Naive thymus-derived CD4-positive, alpha-beta T cell (primary cell): ENCODE measurements at regions of chr3 and their contacts with region 1.

Region 1: DNA sequence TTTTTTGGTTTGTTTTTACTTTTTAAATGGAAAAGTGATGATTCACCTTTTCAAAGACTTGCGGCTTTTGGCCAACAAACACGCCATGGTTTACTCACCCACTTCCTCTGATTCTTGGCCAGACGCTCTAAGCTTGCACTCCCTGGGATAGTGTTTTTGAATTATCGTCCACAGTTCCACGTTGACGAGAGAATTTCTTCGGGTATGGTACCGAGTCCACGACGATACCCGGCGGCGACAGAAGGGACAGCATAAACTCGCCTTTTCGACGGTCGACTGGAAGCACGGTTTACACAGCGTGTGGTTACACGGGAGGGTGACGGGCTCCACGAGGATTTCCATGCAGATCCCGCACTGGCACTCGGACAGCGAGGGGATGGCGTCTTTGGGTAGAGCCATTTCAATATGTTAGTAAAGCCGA is 783 bp downstream of the RNF168 start:
- DNase-seq: peak; percentile 17 to 74 (median 49)
- ATAC-seq: peak; percentile 56
- H3K4me3 ChIP-seq: peak overlapping the region; percentile 94
- H3K4me3 Mint-ChIP-seq: peak overlapping the region; percentile 92 to 100 (median 98)
- H3K27ac ChIP-seq: peak overlapping the region; percentile 79
- H3K27ac Mint-ChIP-seq: peak overlapping the region; percentile 86 to 96 (median 95)
- H3K4me1 ChIP-seq: peaks cover 12 to 20% of the 10 kb centered on the region in 2 donors
- H3K4me1 Mint-ChIP-seq: peaks cover 27 to 47% (median 40%) of the 10 kb centered on the region in 7 donors
- H3K27me3 ChIP-seq: no peaks in the 10 kb centered on the region
- H3K27me3 Mint-ChIP-seq: peaks cover 0 to 10% (median 0%) of the 10 kb centered on the region in 5 donors

Region 2: DNA sequence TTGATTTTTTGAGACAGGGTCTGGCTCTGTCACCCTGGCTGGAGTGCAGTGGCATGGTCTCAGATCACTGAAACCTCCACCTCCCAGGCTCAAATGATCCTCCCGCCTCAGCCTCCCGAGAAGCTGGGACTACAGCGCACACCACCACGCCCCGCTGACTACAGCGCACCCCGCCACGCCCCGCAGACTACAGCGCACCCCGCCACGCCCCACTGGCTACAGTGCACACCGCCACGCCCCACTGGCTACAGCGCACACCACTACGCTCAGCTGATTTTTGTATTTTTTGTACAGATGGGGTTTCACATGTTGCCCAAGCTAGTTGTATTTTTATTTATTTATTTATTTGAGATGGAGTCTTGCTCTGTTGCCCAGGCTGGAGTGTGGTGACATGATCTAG is 250.9 kb before region 1 on chr3:
- CTCF ChIA-PET with region 1: no interaction called
- POLR2A ChIA-PET with region 1: no interaction called
- intact Hi-C with region 1: loop called in 1 of 2 experiments (anchors 5 kb)
- DNase-seq: no peak
- ATAC-seq: no peak
- H3K4me3 ChIP-seq: no peak overlapping the region
- H3K4me3 Mint-ChIP-seq: no peak overlapping the region
- H3K27ac ChIP-seq: no peak overlapping the region
- H3K27ac Mint-ChIP-seq: no peak overlapping the region
- H3K4me1 ChIP-seq: no peaks in the 10 kb centered on the region
- H3K4me1 Mint-ChIP-seq: peaks cover 0 to 8% (median 2%) of the 10 kb centered on the region in 7 donors
- H3K27me3 ChIP-seq: no peaks in the 10 kb centered on the region
- H3K27me3 Mint-ChIP-seq: no peaks in the 10 kb centered on the region

Region 3: GRCh38 chr3:196287440-196288148 is 215.2 kb before region 1 on chr3 and contains the start of gene PCYT1A:
- CTCF ChIA-PET with region 1: no interaction called
- POLR2A ChIA-PET with region 1: no interaction called
- intact Hi-C with region 1: loop called in 1 of 2 experiments (anchors 1 kb)
- DNase-seq: peak; percentile 48 to 75 (median 65)
- ATAC-seq: peak; percentile 93
- H3K4me3 ChIP-seq: peak within 1 kb of the TSS; percentile 99
- H3K4me3 Mint-ChIP-seq: peak within 1 kb of the TSS; percentile 98 to 100 (median 99)
- H3K27ac ChIP-seq: peak within 1 kb of the TSS; percentile 84
- H3K27ac Mint-ChIP-seq: peak within 1 kb of the TSS; percentile 92 to 98 (median 97)
- H3K4me1 ChIP-seq: peaks cover 12 to 15% of the 10 kb centered on the region in 2 donors
- H3K4me1 Mint-ChIP-seq: peaks cover 20 to 56% (median 46%) of the 10 kb centered on the region in 7 donors
- H3K27me3 ChIP-seq: no peaks in the 10 kb centered on the region
- H3K27me3 Mint-ChIP-seq: peaks cover 0 to 2% (median 0%) of the 10 kb centered on the region in 5 donors
- total RNA-seq, gene PCYT1A: 47.5 to 87.6 (median 62.9) TPM

Region 4: GRCh38 chr3:196432137-196432879 is 70.5 kb before region 1 on chr3 and contains the start of gene UBXN7:
- CTCF ChIA-PET with region 1: no interaction called
- POLR2A ChIA-PET with region 1: interaction called, 8 read pairs
- intact Hi-C with region 1: loop called (anchors 1 kb)
- DNase-seq: peak; percentile 92 to 97 (median 95)
- ATAC-seq: peak; percentile 94
- H3K4me3 ChIP-seq: peak within 1 kb of the TSS; percentile 100
- H3K4me3 Mint-ChIP-seq: peak within 1 kb of the TSS; percentile 81 to 98 (median 86)
- H3K27ac ChIP-seq: peak within 1 kb of the TSS; percentile 90
- H3K27ac Mint-ChIP-seq: peak within 1 kb of the TSS; percentile 68 to 95 (median 81)
- H3K4me1 ChIP-seq: peaks cover 4 to 6% of the 10 kb centered on the region in 2 donors
- H3K4me1 Mint-ChIP-seq: peaks cover 17 to 39% (median 32%) of the 10 kb centered on the region in 7 donors
- H3K27me3 ChIP-seq: no peaks in the 10 kb centered on the region
- H3K27me3 Mint-ChIP-seq: peaks cover 0 to 2% (median 0%) of the 10 kb centered on the region in 5 donors
- total RNA-seq, gene UBXN7: 52.6 to 90.6 (median 77.0) TPM

Region 5: GRCh38 chr3:196528639-196529233 is 26.0 kb after region 1 on chr3:
- CTCF ChIA-PET with region 1: interaction called, 3 read pairs
- POLR2A ChIA-PET with region 1: interaction called, 8 read pairs
- intact Hi-C with region 1: loop called (anchors 1 kb)
- DNase-seq: peak; percentile 7 to 93 (median 44)
- ATAC-seq: peak; percentile 98
- H3K4me3 ChIP-seq: peak overlapping the region; percentile 57
- H3K4me3 Mint-ChIP-seq: peak overlapping the region in 9 of 10 donors; percentile 42 to 80 (median 66)
- H3K27ac ChIP-seq: no peak overlapping the region
- H3K27ac Mint-ChIP-seq: peak overlapping the region in 2 of 9 donors; percentile 62 to 74
- H3K4me1 ChIP-seq: peaks cover 0 to 3% of the 10 kb centered on the region in 2 donors
- H3K4me1 Mint-ChIP-seq: peaks cover 0 to 17% (median 0%) of the 10 kb centered on the region in 7 donors
- H3K27me3 ChIP-seq: no peaks in the 10 kb centered on the region
- H3K27me3 Mint-ChIP-seq: peaks cover 7 to 16% (median 16%) of the 10 kb centered on the region in 5 donors

Region 6: DNA sequence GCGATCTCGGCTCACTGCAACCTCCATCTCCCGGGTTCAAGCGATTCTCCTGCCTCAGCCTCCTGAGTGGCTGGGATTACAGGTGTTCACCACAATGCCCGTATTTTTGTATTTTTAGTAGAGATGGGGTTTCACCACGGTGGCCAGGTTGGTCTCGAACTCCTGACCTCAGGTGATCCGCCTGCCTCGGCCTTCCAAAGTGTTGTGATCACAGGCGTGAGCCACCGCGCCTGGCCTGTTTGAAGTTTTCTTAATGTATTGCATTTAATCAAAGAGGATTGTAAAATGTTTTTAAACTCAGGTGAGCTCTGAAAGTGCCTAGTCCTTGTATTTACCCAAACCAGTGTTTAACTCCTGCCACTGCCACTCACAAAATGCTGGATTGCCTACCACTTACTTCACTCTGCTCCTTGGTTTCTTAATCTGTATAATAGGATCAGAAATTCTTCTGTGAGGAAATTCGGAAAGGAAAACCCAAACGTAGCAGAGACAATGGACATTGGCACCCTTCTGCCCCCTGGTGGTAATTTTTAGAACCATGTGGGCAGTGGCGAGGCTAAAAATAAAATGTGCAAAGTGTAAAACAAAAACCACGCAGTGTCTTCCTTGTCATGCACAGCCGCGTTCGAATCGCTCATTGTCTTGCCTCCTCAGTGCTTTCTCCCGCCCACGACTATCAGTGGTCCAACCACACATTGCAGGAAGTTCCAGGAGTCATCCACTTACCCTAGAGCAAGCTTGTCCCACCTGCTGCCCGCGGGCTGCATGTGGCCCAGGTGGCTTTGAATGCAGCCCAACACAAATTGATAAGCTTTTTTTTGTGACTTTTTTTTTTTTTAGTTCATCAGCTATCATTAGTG is 182.0 kb after region 1 on chr3:
- CTCF ChIA-PET with region 1: no interaction called
- POLR2A ChIA-PET with region 1: no interaction called
- intact Hi-C with region 1: no loop called
- DNase-seq: peak; percentile 29 to 78 (median 62)
- ATAC-seq: peak; percentile 78
- H3K4me3 ChIP-seq: peak overlapping the region; percentile 28
- H3K4me3 Mint-ChIP-seq: peak overlapping the region; percentile 51 to 69 (median 67)
- H3K27ac ChIP-seq: peak overlapping the region; percentile 34
- H3K27ac Mint-ChIP-seq: peak overlapping the region; percentile 38 to 80 (median 71)
- H3K4me1 ChIP-seq: peaks cover 0 to 5% of the 10 kb centered on the region in 2 donors
- H3K4me1 Mint-ChIP-seq: peaks cover 14 to 23% (median 17%) of the 10 kb centered on the region in 7 donors
- H3K27me3 ChIP-seq: no peaks in the 10 kb centered on the region
- H3K27me3 Mint-ChIP-seq: peaks cover 0 to 3% (median 0%) of the 10 kb centered on the region in 5 donors

Region 7: DNA sequence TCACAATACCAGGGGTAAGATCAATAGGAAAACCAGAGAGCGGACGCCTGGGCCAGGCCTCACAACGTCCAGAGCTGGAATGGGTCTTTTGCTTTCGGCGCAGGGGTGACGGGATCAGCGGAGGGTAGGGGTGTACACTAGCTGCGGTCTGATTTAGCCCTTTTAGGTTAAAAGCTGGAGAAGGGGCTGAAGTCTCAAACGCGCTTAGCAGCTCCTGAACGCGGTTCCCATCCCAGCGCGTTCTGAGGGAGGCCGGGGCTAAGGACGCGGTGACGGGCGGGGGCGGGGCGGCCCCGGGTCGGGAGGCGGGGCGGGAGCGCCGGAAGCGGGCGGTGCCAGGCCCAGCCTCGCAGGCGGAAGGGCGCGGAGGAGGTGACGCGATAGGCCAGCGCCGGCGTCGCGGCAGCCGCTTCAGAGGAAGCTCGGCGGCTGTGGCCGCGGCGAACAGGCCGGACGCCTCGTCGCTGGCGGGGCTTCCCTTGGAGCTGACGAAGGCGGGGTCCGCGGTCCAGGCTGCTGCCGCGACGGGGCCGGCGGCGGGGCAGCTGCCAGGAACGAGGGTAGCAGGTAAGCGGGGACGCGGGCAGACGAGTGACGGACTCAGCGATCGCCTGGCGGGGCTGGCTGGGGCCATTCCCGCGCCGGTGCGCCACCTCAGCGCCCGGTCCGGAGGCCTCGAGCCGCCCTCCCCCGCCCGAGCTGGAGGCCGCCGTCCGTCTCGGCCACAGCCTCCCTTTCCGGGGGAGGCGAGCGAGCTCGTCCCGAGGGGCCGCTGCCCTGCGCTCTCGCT is 364.9 kb after region 1 on chr3 and contains the start of gene SENP5:
- CTCF ChIA-PET with region 1: no interaction called
- POLR2A ChIA-PET with region 1: no interaction called
- intact Hi-C with region 1: loop called in 1 of 2 experiments (anchors 5 kb)
- DNase-seq: peak; percentile 79 to 92 (median 87)
- ATAC-seq: peak; percentile 99
- H3K4me3 ChIP-seq: peak within 1 kb of the TSS; percentile 86
- H3K4me3 Mint-ChIP-seq: peak within 1 kb of the TSS; percentile 90 to 99 (median 97)
- H3K27ac ChIP-seq: peak within 1 kb of the TSS; percentile 98
- H3K27ac Mint-ChIP-seq: peak within 1 kb of the TSS; percentile 90 to 99 (median 95)
- H3K4me1 ChIP-seq: peaks cover 13 to 16% of the 10 kb centered on the region in 2 donors
- H3K4me1 Mint-ChIP-seq: peaks cover 9 to 42% (median 34%) of the 10 kb centered on the region in 7 donors
- H3K27me3 ChIP-seq: no peaks in the 10 kb centered on the region
- H3K27me3 Mint-ChIP-seq: no peaks in the 10 kb centered on the region
- total RNA-seq, gene SENP5: 40.6 to 59.4 (median 43.1) TPM

Region 8: DNA sequence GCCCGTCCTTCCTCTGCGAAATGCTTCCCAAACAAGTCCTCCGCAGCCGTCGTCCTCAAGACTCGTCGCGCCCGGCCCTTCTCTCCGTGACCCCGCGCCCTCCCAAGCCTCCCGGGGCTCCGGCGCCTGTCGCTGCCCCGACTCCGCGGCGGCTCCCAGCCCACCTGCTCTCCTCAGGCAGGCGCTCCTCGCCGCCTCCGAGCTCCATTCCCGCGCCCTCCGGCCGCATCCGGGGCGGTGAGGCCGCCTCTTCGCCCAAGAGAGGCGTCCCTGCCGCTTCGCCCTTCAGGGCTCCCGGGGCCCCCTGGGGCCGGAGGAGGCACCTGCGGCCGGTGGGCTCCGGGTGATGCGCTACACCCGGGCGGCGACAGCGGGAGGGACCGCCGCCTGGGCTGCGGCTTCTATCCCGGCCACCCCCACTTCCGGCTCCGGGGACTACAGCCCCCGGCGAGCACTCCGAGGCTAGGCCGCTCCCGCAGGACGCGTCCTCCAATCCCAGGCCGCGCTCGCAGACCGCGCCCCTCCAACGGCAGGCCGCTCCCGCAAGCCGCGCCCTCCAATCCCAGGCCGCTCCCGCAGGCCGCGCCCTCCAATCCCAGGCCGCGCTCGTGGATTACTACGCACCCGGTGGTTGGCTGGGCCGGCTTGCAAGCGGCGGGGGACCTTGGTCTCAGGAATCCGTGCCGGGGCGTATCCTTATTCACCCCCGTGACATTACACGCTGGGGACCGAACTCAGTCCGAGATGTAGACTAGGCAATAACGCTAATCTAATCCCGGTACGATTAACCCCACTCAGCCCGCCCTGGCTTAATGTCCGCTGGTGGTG is 1233.9 kb after region 1 on chr3 and contains the start of gene RUBCN:
- CTCF ChIA-PET with region 1: no interaction called
- POLR2A ChIA-PET with region 1: no interaction called
- intact Hi-C with region 1: loop called in 1 of 2 experiments (anchors 1 kb)
- DNase-seq: peak; percentile 81 to 95 (median 93)
- ATAC-seq: peak; percentile 98
- H3K4me3 ChIP-seq: peak within 1 kb of the TSS; percentile 67
- H3K4me3 Mint-ChIP-seq: peak within 1 kb of the TSS; percentile 82 to 99 (median 96)
- H3K27ac ChIP-seq: peak within 1 kb of the TSS; percentile 83
- H3K27ac Mint-ChIP-seq: peak within 1 kb of the TSS; percentile 89 to 99 (median 97)
- H3K4me1 ChIP-seq: peaks cover 9 to 10% of the 10 kb centered on the region in 2 donors
- H3K4me1 Mint-ChIP-seq: peaks cover 29 to 52% (median 32%) of the 10 kb centered on the region in 7 donors
- H3K27me3 ChIP-seq: no peaks in the 10 kb centered on the region
- H3K27me3 Mint-ChIP-seq: no peaks in the 10 kb centered on the region
- total RNA-seq, gene RUBCN: 43.3 to 61.7 (median 52.9) TPM